Heart left ventricle (tissue), 16 donors: ENCODE measurements at regions of chr19 and their contacts with region 1.

Region 1: DNA sequence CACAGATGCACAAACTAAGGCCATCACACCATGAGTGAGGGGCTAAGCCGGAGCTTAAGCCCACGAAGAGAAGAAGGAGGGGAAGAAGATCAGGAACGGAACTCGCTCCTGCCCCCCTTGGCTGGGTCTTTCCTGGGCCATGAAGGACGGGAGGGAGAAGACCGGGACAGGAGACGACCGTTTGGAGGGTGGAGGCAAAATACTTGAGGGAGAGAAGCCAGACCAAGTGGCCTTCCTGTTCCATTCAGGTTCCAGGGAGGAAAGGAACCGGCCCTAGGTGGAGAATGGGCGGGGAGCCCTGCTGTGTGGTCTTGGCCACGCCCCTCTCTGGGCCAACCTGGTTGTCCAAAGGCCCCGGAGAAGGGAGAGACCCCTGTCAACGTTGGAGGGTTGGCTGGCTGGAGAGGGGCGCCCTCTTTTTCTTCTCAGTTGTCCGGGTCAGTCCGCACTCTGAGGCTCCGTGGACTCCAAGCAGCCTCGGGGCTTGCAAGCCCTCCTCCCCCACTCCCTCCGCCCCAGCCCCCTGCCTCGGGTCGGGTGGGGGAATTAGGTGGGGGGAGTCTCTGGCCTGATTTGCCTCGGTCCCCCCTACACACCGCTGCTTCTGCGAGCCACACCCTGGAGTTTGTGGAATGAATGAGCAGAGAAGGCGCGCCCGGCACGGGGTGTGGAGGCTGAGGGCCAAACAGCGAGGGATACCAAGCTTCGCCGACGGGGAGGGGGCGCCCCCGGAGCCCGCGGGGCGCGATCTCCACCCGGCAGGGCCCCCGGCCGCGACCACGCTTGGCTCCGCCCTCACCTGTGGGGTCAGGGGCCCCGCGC is 771 bp downstream of the FBN3 start:
- DNase-seq: no peak
- ATAC-seq: no peak
- H3K4me3 ChIP-seq: peak overlapping the region in 9 of 12 donors; percentile 8 to 46 (median 30)
- H3K27ac ChIP-seq: no peak overlapping the region
- H3K4me1 ChIP-seq: peaks cover 0 to 20% (median 2%) of the 10 kb centered on the region in 12 donors
- H3K27me3 ChIP-seq: peaks cover 10 to 53% (median 34%) of the 10 kb centered on the region in 9 donors
- CTCF ChIP-seq: no peak
- POLR2A ChIP-seq: no peak

Region 2: GRCh38 chr19:7970716-7971448 is 177.7 kb before region 1 on chr19:
- intact Hi-C with region 1: loop called in 1 of 10 experiments (anchors 10 kb)
- DNase-seq: peak in 1 of 5 donors; percentile 48
- ATAC-seq: no peak
- H3K4me3 ChIP-seq: no peak overlapping the region
- H3K27ac ChIP-seq: no peak overlapping the region
- H3K4me1 ChIP-seq: peaks cover 0 to 30% (median 8%) of the 10 kb centered on the region in 12 donors
- H3K27me3 ChIP-seq: no peaks in the 10 kb centered on the region
- CTCF ChIP-seq: peak; percentile 57 to 78 (median 66)
- POLR2A ChIP-seq: no peak

Region 3: DNA sequence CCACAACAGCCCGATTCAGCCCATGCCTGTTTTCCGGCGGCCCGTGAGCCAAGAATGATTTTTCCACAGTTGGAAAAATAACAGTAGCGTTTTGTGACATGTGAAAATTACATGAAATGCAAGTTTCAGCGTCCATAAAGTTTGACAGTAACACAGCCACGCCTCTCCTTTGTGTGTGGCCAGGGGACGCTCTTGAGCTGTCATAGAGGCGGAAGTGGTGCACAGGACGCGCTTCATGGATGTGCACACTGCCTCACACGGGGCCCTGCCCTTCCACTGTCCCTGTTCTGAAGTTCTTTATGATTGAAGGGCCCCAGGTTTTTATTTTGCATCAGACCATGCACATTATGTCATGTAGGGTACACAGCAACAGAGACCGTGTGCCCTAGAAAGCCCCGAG is 130.8 kb before region 1 on chr19:
- intact Hi-C with region 1: loop called in 1 of 10 experiments (anchors 10 kb)
- DNase-seq: no peak
- ATAC-seq: no peak
- H3K4me3 ChIP-seq: no peak overlapping the region
- H3K27ac ChIP-seq: no peak overlapping the region
- H3K4me1 ChIP-seq: no peaks in the 10 kb centered on the region
- H3K27me3 ChIP-seq: no peaks in the 10 kb centered on the region
- CTCF ChIP-seq: no peak
- POLR2A ChIP-seq: no peak

Region 4: DNA sequence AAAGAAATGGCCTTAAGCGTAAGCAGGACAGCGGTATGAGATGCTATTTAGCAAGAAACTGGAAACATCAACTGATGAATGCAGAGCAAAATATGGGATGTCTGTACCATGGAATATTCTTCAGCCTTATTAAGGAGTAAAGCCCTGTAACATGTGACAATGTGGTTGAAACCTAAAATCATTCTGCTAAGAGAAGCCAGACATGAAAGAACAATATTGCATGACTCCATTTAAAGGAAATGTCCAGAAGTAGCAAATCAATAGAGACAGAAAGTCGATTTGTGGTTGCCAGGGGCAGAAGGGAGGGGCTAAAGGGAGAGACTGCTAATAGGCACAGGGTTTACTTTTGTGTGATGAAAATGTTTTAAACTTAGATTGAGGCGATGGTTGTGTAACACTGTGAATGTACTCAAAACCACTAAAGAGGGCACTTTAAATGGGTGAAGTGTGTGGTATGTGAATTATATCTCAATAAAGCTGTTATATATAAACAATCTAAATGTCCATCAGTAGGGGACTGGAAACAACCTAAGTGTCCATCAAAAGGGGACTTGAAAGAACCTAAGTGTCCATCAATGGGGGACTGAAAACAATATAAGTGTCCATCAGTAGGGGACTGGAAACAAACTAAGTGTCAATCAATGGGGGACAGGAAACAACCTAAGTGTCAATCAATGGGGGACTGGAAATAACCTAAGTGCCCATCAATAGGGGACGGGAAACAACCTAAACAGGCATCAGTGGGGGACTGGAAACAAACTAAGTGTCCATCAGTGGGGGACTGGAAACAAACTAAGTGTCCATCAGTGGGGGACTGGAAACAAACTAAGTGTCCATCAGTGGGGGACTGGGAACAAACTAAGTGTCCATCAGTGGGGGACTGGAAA is 50.7 kb before region 1 on chr19:
- intact Hi-C with region 1: no loop called
- DNase-seq: no peak
- ATAC-seq: no peak
- H3K4me3 ChIP-seq: no peak overlapping the region
- H3K27ac ChIP-seq: no peak overlapping the region
- H3K4me1 ChIP-seq: no peaks in the 10 kb centered on the region
- H3K27me3 ChIP-seq: no peaks in the 10 kb centered on the region
- CTCF ChIP-seq: no peak
- POLR2A ChIP-seq: no peak